ENCODE measurements at regions of chr12 and their contacts with region 1.

Region 1: DNA sequence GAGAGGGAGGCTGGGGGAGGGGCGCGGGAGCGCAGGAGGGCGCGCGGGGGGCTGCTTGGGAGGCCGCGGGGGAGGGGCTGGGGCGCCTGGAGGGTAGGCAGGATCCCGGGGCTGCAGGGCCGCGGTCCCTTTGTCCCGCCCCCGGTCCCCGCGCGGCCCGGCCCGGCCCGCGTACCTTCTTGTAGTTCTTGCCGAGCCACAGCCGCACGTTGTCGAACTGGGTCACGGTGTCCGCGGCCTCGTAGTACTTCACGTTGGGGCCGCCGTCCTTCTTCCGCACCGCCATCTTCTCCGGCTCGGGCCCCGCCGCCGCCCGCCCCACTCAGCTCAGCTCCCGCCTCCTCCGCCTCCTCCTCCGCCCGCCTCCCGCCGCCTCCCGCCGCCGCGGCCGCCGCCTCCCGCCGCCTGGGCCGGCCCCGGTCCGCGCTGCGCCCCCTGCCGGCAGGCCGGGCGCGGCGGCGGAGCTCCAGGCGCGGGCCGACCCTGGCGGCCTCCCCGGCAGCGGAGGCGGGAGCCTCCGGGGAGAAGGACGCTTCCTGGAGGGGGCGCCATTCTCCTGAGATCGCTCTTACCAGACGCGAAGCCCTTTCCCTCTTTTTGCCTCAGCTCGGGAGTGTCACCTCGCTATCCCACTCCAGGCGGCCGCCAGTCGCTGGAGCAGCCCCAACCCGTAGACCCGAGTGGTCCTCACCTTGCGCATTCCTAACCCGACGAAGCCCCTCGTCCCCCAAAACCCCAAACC is at the start of gene SMARCC2:
- DNase-seq: peak; percentile 69 to 94 (median 84)
- ATAC-seq: peak; percentile 82
- H3K4me3 ChIP-seq: peak within 1 kb of the TSS; percentile 65 to 96
- H3K4me3 Mint-ChIP-seq: peak within 1 kb of the TSS; percentile 96
- H3K27ac ChIP-seq: peak within 1 kb of the TSS; percentile 66 to 82
- H3K27ac Mint-ChIP-seq: peak within 1 kb of the TSS; percentile 94
- H3K4me1 ChIP-seq: peaks cover 19% of the 10 kb centered on the region
- H3K4me1 Mint-ChIP-seq: peaks cover 43% of the 10 kb centered on the region
- H3K27me3 ChIP-seq: no peaks in the 10 kb centered on the region
- H3K27me3 Mint-ChIP-seq: no peaks in the 10 kb centered on the region
- CTCF ChIP-seq: peak; percentile 61
- total RNA-seq, gene SMARCC2: 109 to 113 TPM

Region 2: GRCh38 chr12:56104109-56104814 is 85.1 kb before region 1 on chr12 and contains the start of gene PA2G4:
- CTCF ChIA-PET with region 1: interaction called, 6 read pairs
- POLR2A ChIA-PET with region 1: interaction called, 15 read pairs
- intact Hi-C with region 1: no loop called
- DNase-seq: peak; percentile 91 to 99 (median 96)
- ATAC-seq: peak; percentile 88
- H3K4me3 ChIP-seq: peak within 1 kb of the TSS; percentile 90
- H3K4me3 Mint-ChIP-seq: peak within 1 kb of the TSS; percentile 99
- H3K27ac ChIP-seq: peak within 1 kb of the TSS; percentile 53 to 70
- H3K27ac Mint-ChIP-seq: peak within 1 kb of the TSS; percentile 98
- H3K4me1 ChIP-seq: peaks cover 37% of the 10 kb centered on the region
- H3K4me1 Mint-ChIP-seq: peaks cover 66% of the 10 kb centered on the region
- H3K27me3 ChIP-seq: no peaks in the 10 kb centered on the region
- H3K27me3 Mint-ChIP-seq: no peaks in the 10 kb centered on the region
- CTCF ChIP-seq: no peak
- total RNA-seq, gene PA2G4: 61.6 to 62.4 TPM

Region 3: DNA sequence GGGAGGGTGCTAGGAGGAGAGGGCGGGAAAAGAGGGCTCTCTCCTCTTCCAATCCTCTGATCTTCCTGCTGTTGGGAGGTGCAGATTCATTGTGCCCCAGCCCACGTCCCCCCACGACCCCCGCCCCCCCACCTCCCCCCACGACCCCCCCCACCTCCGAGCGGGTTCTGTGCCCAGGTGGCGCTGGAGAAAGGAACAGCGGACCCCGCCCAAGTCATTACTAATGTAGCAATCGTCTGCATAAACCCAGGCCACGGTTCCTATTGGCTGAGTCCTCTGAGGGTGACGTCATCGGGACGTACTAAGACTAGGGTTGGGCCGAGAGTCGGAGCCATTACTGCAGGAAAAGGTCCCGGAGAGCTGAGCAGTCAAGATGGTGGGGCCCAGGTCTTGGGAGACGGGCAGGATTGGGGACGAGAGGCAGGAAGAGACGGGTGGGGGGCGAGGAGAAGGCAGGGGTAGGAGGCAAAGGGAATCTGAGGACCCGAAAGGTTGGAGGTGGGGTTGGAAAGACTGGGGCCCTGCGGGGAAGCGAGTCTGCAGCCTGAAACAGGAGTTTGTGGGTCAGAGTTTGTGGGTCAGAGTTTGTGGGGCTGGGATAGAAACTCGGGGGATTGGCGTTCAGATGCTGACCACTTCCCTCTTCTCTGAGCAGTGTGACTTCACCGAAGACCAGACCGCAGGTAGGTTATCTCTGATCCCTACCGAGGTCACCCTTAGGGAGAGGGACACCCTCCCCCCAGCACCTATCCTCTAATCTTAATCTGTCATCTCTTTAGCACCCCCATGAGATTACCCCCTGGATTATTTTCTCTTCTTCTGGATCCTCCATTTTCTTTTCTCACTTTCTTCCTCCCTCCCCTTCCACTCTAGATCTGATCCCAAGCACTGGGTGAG is 31.1 kb before region 1 on chr12 and contains the start of gene MYL6:
- CTCF ChIA-PET with region 1: interaction called, 10 read pairs
- POLR2A ChIA-PET with region 1: interaction called, 30 read pairs
- intact Hi-C with region 1: loop called (anchors 1 to 2 kb)
- DNase-seq: peak; percentile 72 to 98 (median 90)
- ATAC-seq: peak; percentile 79
- H3K4me3 ChIP-seq: peak within 1 kb of the TSS; percentile 70 to 83
- H3K4me3 Mint-ChIP-seq: peak within 1 kb of the TSS; percentile 98
- H3K27ac ChIP-seq: peak within 1 kb of the TSS; percentile 86 to 94
- H3K27ac Mint-ChIP-seq: peak within 1 kb of the TSS; percentile 99
- H3K4me1 ChIP-seq: peaks cover 32% of the 10 kb centered on the region
- H3K4me1 Mint-ChIP-seq: peaks cover 42% of the 10 kb centered on the region
- H3K27me3 ChIP-seq: no peaks in the 10 kb centered on the region
- H3K27me3 Mint-ChIP-seq: no peaks in the 10 kb centered on the region
- CTCF ChIP-seq: no peak
- total RNA-seq, gene MYL6: 580 to 582 TPM

Region 4: DNA sequence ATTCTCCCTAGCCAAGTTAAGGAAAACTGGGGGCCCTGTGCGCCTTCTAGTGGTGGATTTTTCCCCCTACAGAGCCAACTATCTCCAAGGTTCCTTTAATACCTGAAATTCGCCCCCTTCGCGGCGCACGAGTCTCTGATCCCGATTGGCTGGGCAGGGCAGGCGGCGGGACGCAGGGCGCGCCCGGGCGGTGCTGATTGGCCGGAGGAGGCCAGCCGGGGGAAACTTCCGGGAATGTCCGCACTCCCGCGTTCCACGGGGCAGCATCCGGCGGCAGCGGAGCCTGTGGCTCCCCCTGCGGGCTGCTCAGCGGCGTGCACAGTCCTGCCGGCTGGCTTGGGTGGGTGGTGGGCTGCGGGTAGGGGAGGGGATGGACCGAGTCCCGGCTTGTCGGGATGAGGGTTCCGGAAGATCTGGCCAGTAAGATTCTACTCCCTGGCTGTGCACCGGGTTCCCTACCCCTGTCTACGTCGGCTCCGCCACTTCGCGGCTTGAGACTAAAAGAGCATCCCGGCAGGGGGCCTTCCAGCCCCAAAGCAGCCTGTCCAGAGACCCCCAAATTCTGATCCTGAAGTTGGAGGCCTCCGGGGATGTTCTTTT is 34.9 kb after region 1 on chr12 and contains the start of gene NABP2:
- CTCF ChIA-PET with region 1: interaction called, 25 read pairs
- POLR2A ChIA-PET with region 1: interaction called, 27 read pairs
- intact Hi-C with region 1: loop called (anchors 1 kb)
- DNase-seq: peak; percentile 74 to 97 (median 91)
- ATAC-seq: peak; percentile 64
- H3K4me3 ChIP-seq: peak within 1 kb of the TSS; percentile 65 to 68
- H3K4me3 Mint-ChIP-seq: peak within 1 kb of the TSS; percentile 95
- H3K27ac ChIP-seq: peak within 1 kb of the TSS; percentile 53 to 85
- H3K27ac Mint-ChIP-seq: peak within 1 kb of the TSS; percentile 99
- H3K4me1 ChIP-seq: peaks cover 29% of the 10 kb centered on the region
- H3K4me1 Mint-ChIP-seq: peaks cover 44% of the 10 kb centered on the region
- H3K27me3 ChIP-seq: no peaks in the 10 kb centered on the region
- H3K27me3 Mint-ChIP-seq: no peaks in the 10 kb centered on the region
- CTCF ChIP-seq: peak; percentile 84
- total RNA-seq, gene NABP2: 6.8 to 7.4 TPM

Region 5: GRCh38 chr12:56315622-56316473 is 126.5 kb after region 1 on chr12 and contains the start of gene CNPY2:
- CTCF ChIA-PET with region 1: interaction called, 3 read pairs
- POLR2A ChIA-PET with region 1: interaction called, 6 read pairs
- intact Hi-C with region 1: loop called in 1 of 2 experiments (anchors 5 kb)
- DNase-seq: peak; percentile 89 to 97 (median 95)
- ATAC-seq: peak; percentile 92
- H3K4me3 ChIP-seq: peak within 1 kb of the TSS; percentile 86 to 99
- H3K4me3 Mint-ChIP-seq: peak within 1 kb of the TSS; percentile 99
- H3K27ac ChIP-seq: peak within 1 kb of the TSS; percentile 70 to 98
- H3K27ac Mint-ChIP-seq: peak within 1 kb of the TSS; percentile 98
- H3K4me1 ChIP-seq: peaks cover 10% of the 10 kb centered on the region
- H3K4me1 Mint-ChIP-seq: peaks cover 16% of the 10 kb centered on the region
- H3K27me3 ChIP-seq: no peaks in the 10 kb centered on the region
- H3K27me3 Mint-ChIP-seq: no peaks in the 10 kb centered on the region
- CTCF ChIP-seq: no peak
- total RNA-seq, gene CNPY2: 23.5 to 33.9 TPM

Region 6: GRCh38 chr12:56510786-56511185 is 321.4 kb after region 1 on chr12:
- CTCF ChIA-PET with region 1: no interaction called
- POLR2A ChIA-PET with region 1: no interaction called
- intact Hi-C with region 1: loop called in 1 of 2 experiments (anchors 10 kb)
- DNase-seq: no peak
- ATAC-seq: no peak
- H3K4me3 ChIP-seq: no peak overlapping the region
- H3K4me3 Mint-ChIP-seq: no peak overlapping the region
- H3K27ac ChIP-seq: no peak overlapping the region
- H3K27ac Mint-ChIP-seq: no peak overlapping the region
- H3K4me1 ChIP-seq: no peaks in the 10 kb centered on the region
- H3K4me1 Mint-ChIP-seq: peaks cover 4% of the 10 kb centered on the region
- H3K27me3 ChIP-seq: no peaks in the 10 kb centered on the region
- H3K27me3 Mint-ChIP-seq: peaks cover 3% of the 10 kb centered on the region
- CTCF ChIP-seq: no peak

Measured in CD8-positive, alpha-beta T cell (primary cell).